H1 (cell line): ENCODE measurements at regions of chr2 and their contacts with region 1.

Region 1: DNA sequence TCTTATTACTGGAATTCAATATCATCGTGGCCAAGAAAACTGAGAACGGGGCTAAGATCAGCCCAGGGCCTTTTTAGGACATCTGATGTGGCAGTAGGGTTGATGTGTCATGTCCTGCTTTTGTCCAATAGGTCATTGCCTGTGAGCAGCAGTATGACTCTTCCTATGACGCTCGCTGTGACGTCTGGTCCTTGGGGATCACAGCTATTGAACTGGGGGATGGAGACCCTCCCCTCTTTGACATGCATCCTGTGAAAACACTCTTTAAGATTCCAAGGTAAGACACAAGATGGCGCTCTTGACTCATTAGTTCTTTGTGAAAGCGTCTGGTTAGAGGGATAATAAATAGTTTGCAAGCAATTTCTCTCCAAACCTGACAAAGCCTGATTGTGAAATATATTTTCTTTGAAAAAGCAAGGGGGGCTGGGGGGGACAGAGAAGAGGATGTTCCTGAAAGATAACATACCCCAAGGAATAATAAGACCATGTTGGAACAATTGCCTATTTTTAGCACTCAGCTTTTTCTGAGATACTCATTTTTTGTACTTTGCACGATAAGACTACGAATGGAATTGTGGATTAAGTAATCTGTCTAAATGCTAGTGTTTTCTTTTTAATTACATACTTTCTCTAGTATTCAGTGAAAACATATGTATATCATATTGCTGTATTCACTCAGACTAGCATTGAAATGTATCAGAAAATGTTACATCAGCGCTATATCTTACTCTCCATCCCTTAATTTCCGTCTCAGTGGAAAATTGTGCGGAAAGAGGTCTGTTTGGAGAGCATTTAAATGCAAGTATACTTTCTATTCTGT is 58.1 kb downstream of the MYO3B start:
- DNase-seq: peak in 1 of 2 experiments; percentile 55
- H3K4me3 ChIP-seq: no peak overlapping the region
- H3K27ac ChIP-seq: no peak overlapping the region
- H3K4me1 ChIP-seq: peaks cover 0 to 4% (median 1%) of the 10 kb centered on the region in 4 experiments; a peak in 2 of 7 replicates
- H3K27me3 ChIP-seq: no peaks in the 10 kb centered on the region
- CTCF ChIP-seq: peak in 2 of 3 experiments; percentile 69 to 72; a peak in 3 of 4 replicates
- EP300 ChIP-seq: no peak
- POLR2A ChIP-seq: no peak
- RAD21 ChIP-seq: peak; percentile 86 to 94

Region 2: DNA sequence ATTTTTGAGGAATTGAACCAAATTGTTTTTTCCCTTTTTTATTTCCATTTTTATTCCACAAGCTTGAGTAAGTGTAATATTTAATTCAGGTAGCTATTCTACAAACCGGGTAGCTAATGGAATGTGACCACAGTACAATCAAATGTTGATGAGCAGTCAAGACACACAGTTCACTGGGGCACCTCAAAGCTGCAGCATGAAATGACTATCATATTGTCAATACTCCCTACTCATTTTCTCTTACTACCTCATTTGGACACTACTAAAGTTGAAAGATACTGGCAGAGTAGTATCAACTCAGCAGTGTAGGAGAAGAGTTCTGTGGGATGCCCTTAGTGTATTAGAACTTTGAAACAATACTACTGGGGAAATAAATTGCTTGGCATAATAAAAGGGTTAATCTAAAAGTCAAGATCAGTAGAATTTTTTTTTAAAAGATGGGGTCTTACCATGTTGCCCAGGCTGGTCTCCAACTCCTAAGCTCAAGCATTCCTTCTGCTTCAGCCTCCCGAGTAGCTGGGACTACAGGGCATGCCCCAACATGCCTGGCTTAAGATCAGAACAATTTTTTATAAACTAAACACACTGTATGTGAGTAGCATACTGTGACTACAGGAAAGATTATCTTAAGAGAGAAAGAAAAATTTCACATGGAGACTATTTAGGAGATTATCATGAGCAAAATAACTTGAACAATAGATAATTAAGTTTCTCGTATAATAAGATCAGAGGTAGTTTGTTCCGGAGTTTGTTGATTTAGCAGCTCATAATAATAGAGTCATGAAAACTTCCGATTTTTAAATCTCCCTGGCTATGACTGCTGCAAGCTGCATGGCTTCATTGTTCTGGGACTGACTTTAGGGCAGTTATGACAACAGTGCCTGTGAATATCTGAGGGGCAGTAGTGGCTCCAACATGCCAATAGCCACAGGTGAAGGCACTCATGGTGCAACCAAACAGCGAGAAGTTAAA is 14.5 kb before region 1 on chr2:
- CTCF ChIA-PET with region 1: interaction called, 39 read pairs
- POLR2A ChIA-PET with region 1: no interaction called
- DNase-seq: peak in 1 of 2 experiments; percentile 49
- H3K4me3 ChIP-seq: no peak overlapping the region
- H3K27ac ChIP-seq: 0 out of 2 replicates have a peak overlapping the region, but pooled peaks have one; percentile 20
- H3K4me1 ChIP-seq: peaks cover 0 to 14% (median 8%) of the 10 kb centered on the region in 4 experiments; a peak in 4 of 7 replicates
- H3K27me3 ChIP-seq: no peaks in the 10 kb centered on the region
- CTCF ChIP-seq: no peak
- EP300 ChIP-seq: no peak
- POLR2A ChIP-seq: no peak
- RAD21 ChIP-seq: no peak

Region 3: DNA sequence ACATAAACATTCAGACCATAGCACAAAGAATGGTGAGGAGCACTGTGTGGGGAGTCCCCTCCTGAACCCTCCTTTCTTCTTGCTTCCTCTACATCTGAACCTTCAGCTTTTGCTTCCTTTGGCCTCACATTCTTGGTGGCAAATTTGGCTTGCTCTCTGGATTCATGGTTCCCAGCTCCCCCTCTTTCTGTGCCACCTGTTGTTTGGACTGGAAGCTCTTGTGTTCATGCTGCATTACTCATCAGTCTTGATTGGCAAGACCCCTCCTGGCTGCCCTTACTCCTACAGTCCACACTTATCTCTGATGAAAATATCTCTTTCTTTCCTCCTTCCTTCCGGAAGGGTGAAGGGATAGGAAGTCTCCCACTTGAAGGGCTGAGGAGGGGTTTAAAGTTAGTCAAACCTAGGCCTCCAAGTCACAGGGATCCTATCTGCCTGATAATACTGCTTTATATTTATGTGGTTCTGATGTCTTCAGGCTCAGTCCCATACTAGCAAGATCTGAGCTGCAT is 11.9 kb after region 1 on chr2:
- CTCF ChIA-PET with region 1: interaction called, 23 read pairs
- POLR2A ChIA-PET with region 1: no interaction called
- DNase-seq: no peak
- H3K4me3 ChIP-seq: no peak overlapping the region
- H3K27ac ChIP-seq: no peak overlapping the region
- H3K4me1 ChIP-seq: no peaks in the 10 kb centered on the region
- H3K27me3 ChIP-seq: no peaks in the 10 kb centered on the region
- CTCF ChIP-seq: no peak
- EP300 ChIP-seq: no peak
- POLR2A ChIP-seq: no peak
- RAD21 ChIP-seq: no peak

Region 4: GRCh38 chr2:170260188-170260587 is 24.1 kb after region 1 on chr2:
- CTCF ChIA-PET with region 1: no interaction called
- POLR2A ChIA-PET with region 1: no interaction called
- DNase-seq: no peak
- H3K4me3 ChIP-seq: no peak overlapping the region
- H3K27ac ChIP-seq: no peak overlapping the region
- H3K4me1 ChIP-seq: no peaks in the 10 kb centered on the region
- H3K27me3 ChIP-seq: no peaks in the 10 kb centered on the region
- CTCF ChIP-seq: no peak
- EP300 ChIP-seq: no peak
- POLR2A ChIP-seq: no peak
- RAD21 ChIP-seq: no peak

Region 5: GRCh38 chr2:170369894-170370293 is 133.8 kb after region 1 on chr2:
- CTCF ChIA-PET with region 1: interaction called, 10 read pairs
- POLR2A ChIA-PET with region 1: no interaction called
- DNase-seq: no peak
- H3K4me3 ChIP-seq: peak overlapping the region in 1 of 4 experiments; percentile 27; a peak in 1 of 8 replicates
- H3K27ac ChIP-seq: no peak overlapping the region
- H3K4me1 ChIP-seq: peaks cover 0 to 16% (median 10%) of the 10 kb centered on the region in 4 experiments; a peak in 4 of 7 replicates
- H3K27me3 ChIP-seq: no peaks in the 10 kb centered on the region
- CTCF ChIP-seq: no peak
- EP300 ChIP-seq: no peak
- POLR2A ChIP-seq: no peak
- RAD21 ChIP-seq: no peak; a peak in 1 of 4 replicates